ENCODE measurements at regions of chr20 and their contacts with region 1.

Region 1: GRCh38 chr20:57622579-57623377 is 2.6 kb upstream of the ZBP1 start:
- DNase-seq: peak; percentile 32 to 82 (median 67)
- ATAC-seq: peak in 2 of 4 experiments; percentile 15 to 34
- H3K4me3 ChIP-seq: no peak overlapping the region
- H3K4me3 Mint-ChIP-seq: peak overlapping the region in 1 of 3 donors; percentile 19
- H3K27ac ChIP-seq: no peak overlapping the region
- H3K27ac Mint-ChIP-seq: peak overlapping the region; percentile 78 to 84
- H3K4me1 ChIP-seq: peaks cover 48 to 69% of the 10 kb centered on the region in 2 experiments
- H3K4me1 Mint-ChIP-seq: peaks cover 74 to 79% (median 78%) of the 10 kb centered on the region in 3 donors
- H3K27me3 ChIP-seq: no peaks in the 10 kb centered on the region
- H3K27me3 Mint-ChIP-seq: no peaks in the 10 kb centered on the region

Region 2: DNA sequence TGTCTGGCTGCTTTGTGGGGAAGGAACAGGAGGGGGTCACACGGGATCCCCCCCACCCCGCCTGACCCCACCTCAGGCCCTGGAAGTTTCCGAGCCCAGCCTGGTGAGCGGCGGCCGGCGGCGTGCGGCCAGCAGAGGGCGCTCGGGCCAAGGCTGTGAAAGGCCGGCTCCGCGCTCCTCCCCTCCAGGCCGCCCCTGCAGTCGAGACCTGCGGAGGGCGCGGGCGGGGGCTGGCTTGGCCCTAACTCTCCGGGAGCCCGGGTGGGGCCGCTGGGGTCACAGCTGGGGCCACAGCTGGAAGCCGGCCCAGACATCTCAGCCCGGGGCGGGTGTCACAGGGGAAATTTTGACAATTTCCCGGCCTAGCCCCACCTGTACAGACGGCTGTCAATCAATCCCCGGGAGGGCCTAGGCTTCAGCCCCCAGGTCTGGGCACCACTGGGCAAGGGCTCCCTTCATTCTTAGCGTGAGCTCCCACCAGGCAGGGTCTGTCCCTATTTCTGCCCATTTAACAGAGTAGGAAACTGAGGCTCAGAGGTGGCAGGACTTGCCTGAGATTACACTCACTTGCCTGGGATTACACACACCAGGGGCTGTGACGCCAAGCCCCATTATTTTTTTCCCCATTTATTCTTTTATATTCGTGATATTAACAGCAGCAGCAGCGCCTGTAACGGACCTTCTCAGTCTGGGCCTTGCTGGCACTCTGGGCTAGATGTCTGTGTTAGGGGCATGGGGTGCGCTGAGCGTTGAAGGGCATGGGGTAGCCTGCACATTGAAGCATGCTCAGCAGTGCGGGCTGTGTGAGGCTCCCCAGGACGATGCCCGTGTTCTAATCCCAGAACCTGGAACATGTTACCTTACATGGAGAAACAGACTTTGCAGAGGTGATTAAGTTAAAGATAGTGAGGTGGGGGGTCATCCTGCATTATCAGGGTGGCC is 25.5 kb before region 1 on chr20:
- CTCF ChIA-PET with region 1: interaction called, 3 to 10 read pairs
- POLR2A ChIA-PET with region 1: interaction called in 1 of 2 experiments, 3 read pairs
- DNase-seq: peak in 34 of 35 experiments; percentile 39 to 88 (median 68)
- ATAC-seq: peak; percentile 79 to 92 (median 86)
- H3K4me3 ChIP-seq: peak overlapping the region in 1 of 2 donors; percentile 8
- H3K4me3 Mint-ChIP-seq: no peak overlapping the region
- H3K27ac ChIP-seq: no peak overlapping the region
- H3K27ac Mint-ChIP-seq: no peak overlapping the region
- H3K4me1 ChIP-seq: peaks cover 0 to 16% of the 10 kb centered on the region in 2 experiments
- H3K4me1 Mint-ChIP-seq: peaks cover 2 to 15% (median 6%) of the 10 kb centered on the region in 3 donors
- H3K27me3 ChIP-seq: peaks cover 2 to 31% of the 10 kb centered on the region in 2 experiments
- H3K27me3 Mint-ChIP-seq: peaks cover 0 to 3% of the 10 kb centered on the region in 2 donors

Region 3: DNA sequence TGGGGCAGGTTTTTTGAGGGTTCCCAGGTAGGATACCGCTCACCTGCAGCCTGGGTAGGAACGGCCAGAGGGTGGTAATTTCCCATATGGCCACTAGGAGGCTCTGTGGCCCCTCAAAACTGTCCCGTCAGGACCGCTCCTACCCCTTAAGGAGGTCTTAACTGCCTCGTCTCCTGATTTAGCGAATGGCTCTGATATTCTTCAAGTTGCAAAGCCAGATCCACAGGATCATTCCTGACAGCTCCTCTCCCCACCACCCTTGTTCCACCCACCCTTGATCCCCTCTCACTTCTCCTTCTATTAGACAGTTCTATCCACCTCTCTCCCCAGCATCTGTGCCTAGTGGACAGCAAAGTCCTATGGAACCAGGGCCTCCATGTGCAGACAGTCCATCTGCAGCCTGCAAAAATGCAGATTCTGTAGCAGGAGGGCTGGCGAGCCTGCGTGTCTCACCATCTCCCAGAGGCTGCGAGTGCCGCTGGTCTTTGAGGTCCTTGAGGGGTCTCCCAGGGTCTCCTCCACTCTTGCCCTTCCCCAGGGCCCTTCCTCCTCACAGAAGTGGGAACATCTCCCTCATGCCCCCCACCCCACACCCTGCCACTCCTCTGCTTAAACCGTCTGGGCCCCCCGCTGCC is 31.7 kb after region 1 on chr20:
- CTCF ChIA-PET with region 1: interaction called, 6 to 10 read pairs
- POLR2A ChIA-PET with region 1: no interaction called
- DNase-seq: peak in 33 of 35 experiments; percentile 18 to 82 (median 47)
- ATAC-seq: peak; percentile 67 to 75 (median 68)
- H3K4me3 ChIP-seq: no peak overlapping the region
- H3K4me3 Mint-ChIP-seq: no peak overlapping the region
- H3K27ac ChIP-seq: no peak overlapping the region
- H3K27ac Mint-ChIP-seq: peak overlapping the region in 1 of 2 donors; percentile 11
- H3K4me1 ChIP-seq: peaks cover 11 to 46% of the 10 kb centered on the region in 2 experiments
- H3K4me1 Mint-ChIP-seq: peaks cover 33 to 41% (median 37%) of the 10 kb centered on the region in 3 donors
- H3K27me3 ChIP-seq: peaks cover 0 to 6% of the 10 kb centered on the region in 2 experiments
- H3K27me3 Mint-ChIP-seq: no peaks in the 10 kb centered on the region

Region 4: GRCh38 chr20:57682184-57683101 is 59.7 kb after region 1 on chr20:
- CTCF ChIA-PET with region 1: interaction called, 3 to 12 read pairs
- POLR2A ChIA-PET with region 1: no interaction called
- DNase-seq: no peak
- ATAC-seq: no peak
- H3K4me3 ChIP-seq: no peak overlapping the region
- H3K4me3 Mint-ChIP-seq: no peak overlapping the region
- H3K27ac ChIP-seq: no peak overlapping the region
- H3K27ac Mint-ChIP-seq: no peak overlapping the region
- H3K4me1 ChIP-seq: peaks cover 2 to 16% of the 10 kb centered on the region in 2 experiments
- H3K4me1 Mint-ChIP-seq: peaks cover 25 to 50% (median 43%) of the 10 kb centered on the region in 3 donors
- H3K27me3 ChIP-seq: peaks cover 0 to 12% of the 10 kb centered on the region in 2 experiments
- H3K27me3 Mint-ChIP-seq: no peaks in the 10 kb centered on the region

Region 5: DNA sequence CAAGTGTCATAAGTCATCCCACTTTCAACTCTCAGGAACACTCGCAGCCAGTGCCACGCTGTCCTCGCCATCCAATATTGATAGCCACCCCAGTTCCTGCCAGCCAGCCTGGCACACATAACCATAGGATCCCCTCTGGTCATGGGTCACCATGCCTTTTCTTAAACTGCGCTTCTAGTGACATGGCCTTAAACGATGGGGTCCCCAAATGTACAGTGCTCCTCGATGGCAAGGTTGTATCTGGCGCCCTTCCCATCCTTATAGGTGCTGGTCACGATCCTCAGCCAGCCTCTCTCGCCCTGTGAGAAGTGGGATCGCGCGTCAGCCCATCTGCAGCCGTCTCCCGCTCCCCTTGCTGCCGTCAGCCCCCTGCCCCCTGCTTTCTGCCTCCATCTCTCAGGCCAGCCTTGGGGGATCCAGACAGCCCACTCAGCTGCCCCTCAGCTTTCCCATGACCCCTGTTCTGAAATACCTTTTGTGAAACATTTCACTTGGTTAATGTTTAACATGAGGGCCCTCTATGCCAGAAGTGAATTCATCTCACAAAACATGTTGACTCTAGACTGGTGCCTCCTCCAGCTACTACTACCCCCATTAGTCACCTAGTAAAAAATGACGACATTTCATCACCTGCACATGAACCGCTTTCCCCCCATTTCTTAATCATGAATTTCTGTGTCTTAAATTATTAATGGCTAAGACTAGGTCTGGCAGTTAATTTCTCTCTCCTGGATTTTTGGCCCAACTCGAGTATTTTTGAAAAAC is 1372.9 kb after region 1 on chr20:
- CTCF ChIA-PET with region 1: no interaction called
- POLR2A ChIA-PET with region 1: no interaction called
- DNase-seq: no peak
- ATAC-seq: peak in 1 of 4 experiments; percentile 23
- H3K4me3 ChIP-seq: no peak overlapping the region
- H3K4me3 Mint-ChIP-seq: no peak overlapping the region
- H3K27ac ChIP-seq: no peak overlapping the region
- H3K27ac Mint-ChIP-seq: peak overlapping the region; percentile 12 to 16
- H3K4me1 ChIP-seq: no peaks in the 10 kb centered on the region
- H3K4me1 Mint-ChIP-seq: peaks cover 0 to 3% (median 3%) of the 10 kb centered on the region in 3 donors
- H3K27me3 ChIP-seq: no peaks in the 10 kb centered on the region
- H3K27me3 Mint-ChIP-seq: no peaks in the 10 kb centered on the region